H1 (cell line): ENCODE measurements at regions of chr2 and their contacts with region 1.

Region 1: DNA sequence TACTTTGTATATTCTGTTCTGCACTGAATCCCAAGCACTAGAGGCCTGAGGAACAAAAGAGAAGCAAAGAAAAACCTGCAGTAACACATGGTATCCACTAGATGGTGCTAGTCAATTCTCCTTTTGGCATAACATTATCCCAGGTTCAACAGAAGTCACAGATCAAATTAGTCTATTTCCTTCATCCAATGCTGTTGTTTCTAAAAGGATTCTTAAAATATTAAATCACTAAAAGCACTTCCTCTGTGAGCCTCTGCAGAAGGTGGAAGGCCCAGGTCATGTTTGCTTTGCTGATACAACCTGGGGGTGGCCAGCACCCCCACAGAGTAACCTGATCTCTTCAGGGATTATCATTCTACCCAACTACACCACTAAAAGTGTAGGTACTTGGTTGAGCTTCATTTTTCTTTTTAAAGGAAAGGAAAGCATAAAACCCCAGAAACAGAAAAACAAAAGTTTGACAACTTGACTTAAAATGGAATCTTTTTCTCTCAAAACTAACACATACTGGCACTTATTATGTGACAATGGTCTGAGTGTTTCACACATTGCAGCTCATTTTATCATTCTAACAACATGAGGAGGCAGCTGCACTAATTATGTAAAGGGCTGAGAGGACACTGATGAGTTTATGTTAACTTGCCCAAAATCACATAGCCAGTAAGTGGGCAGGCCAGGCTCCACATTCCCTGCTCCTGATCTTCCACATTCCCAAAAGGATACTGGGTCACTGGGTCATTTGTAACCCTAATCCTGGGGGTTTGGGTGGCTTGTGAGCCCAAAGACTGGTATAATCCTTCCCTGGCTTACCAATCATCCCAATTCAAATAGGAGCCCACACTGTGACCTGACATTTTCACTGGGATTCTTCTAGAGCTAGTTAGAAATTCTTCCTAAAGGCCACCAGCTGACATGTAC is 66.8 kb upstream of the DNER start:
- DNase-seq: peak in 1 of 2 experiments; percentile 50
- H3K4me3 ChIP-seq: no peak overlapping the region
- H3K27ac ChIP-seq: no peak overlapping the region
- H3K4me1 ChIP-seq: peaks cover 0 to 18% (median 9%) of the 10 kb centered on the region in 4 experiments; a peak in 6 of 7 replicates
- H3K27me3 ChIP-seq: no peaks in the 10 kb centered on the region
- CTCF ChIP-seq: peak in 2 of 3 experiments; percentile 39 to 85; a peak in 2 of 4 replicates
- EP300 ChIP-seq: no peak
- POLR2A ChIP-seq: no peak
- RAD21 ChIP-seq: peak; percentile 50

Region 2: GRCh38 chr2:229553091-229553490 is 228.0 kb before region 1 on chr2:
- CTCF ChIA-PET with region 1: no interaction called
- POLR2A ChIA-PET with region 1: no interaction called
- DNase-seq: no peak
- H3K4me3 ChIP-seq: no peak overlapping the region
- H3K27ac ChIP-seq: no peak overlapping the region
- H3K4me1 ChIP-seq: no peaks in the 10 kb centered on the region
- H3K27me3 ChIP-seq: no peaks in the 10 kb centered on the region
- CTCF ChIP-seq: no peak
- EP300 ChIP-seq: no peak
- POLR2A ChIP-seq: no peak
- RAD21 ChIP-seq: no peak

Region 3: DNA sequence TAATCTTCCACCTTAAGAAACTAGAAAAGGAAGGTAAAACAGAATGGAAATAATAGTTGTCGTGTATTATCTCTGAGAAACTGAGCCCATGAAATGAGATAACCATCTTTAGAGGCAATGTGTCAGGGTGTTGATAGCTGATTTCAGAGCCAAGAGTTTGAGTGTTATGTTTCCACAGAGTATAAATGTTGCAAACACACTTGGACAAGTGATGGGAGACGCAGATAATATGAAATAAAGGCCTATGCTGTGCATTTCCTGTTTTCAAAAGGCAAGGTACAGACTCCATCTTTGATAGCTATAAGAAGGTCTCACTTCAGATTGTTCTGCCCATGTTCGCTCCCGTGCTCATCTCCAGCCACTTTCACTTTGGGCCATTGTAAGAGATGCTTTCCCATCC is 40.8 kb before region 1 on chr2:
- CTCF ChIA-PET with region 1: no interaction called
- POLR2A ChIA-PET with region 1: no interaction called
- DNase-seq: no peak
- H3K4me3 ChIP-seq: no peak overlapping the region
- H3K27ac ChIP-seq: no peak overlapping the region
- H3K4me1 ChIP-seq: 0 out of 7 replicates have a peak, but pooled peaks cover 0 to 2% (median 0%) of the 10 kb centered on the region in 4 experiments
- H3K27me3 ChIP-seq: no peaks in the 10 kb centered on the region
- CTCF ChIP-seq: no peak
- EP300 ChIP-seq: no peak
- POLR2A ChIP-seq: no peak
- RAD21 ChIP-seq: no peak

Region 4: DNA sequence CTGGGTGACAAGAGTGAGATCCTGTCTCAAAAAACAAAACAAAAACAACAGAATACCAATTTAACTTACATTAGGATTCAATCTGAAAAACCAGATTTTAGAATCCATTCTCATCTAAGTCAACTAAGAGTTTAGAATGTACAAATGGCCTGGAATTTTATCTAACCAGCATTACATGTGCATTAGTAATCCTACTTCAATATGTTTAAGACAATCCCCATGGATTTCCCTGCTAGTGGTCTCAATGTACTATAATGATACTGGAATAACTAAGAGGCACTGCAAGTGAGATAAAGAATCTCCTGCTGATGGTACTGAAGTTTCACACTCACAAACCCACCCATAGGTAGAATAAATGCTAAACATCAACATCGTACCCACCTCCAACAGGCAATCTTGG is 12.9 kb before region 1 on chr2:
- CTCF ChIA-PET with region 1: interaction called, 24 read pairs
- POLR2A ChIA-PET with region 1: interaction called, 5 read pairs
- DNase-seq: no peak
- H3K4me3 ChIP-seq: no peak overlapping the region
- H3K27ac ChIP-seq: no peak overlapping the region
- H3K4me1 ChIP-seq: no peaks in the 10 kb centered on the region
- H3K27me3 ChIP-seq: no peaks in the 10 kb centered on the region
- CTCF ChIP-seq: no peak
- EP300 ChIP-seq: no peak
- POLR2A ChIP-seq: no peak
- RAD21 ChIP-seq: no peak

Region 5: DNA sequence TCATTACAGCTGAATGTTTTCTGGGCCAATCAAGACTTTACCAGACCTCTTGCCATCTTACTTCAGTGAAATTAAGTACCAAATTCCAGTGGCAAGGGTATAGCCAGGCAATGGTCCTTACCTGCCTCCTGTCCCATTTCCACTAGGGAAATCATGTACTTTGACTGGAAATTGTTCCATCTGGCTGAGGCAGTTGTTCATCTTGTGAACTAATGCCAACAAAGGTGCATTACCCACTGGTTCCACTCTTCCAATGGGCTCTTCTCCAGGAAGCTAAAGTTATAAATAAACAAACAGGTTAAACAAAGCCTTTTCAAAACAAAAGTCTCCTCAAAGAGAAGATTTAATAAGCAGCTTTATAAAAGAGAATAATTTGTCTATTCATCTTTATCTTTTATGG is 13.9 kb after region 1 on chr2:
- CTCF ChIA-PET with region 1: interaction called, 12 read pairs
- POLR2A ChIA-PET with region 1: no interaction called
- DNase-seq: no peak
- H3K4me3 ChIP-seq: no peak overlapping the region
- H3K27ac ChIP-seq: no peak overlapping the region
- H3K4me1 ChIP-seq: no peaks in the 10 kb centered on the region
- H3K27me3 ChIP-seq: no peaks in the 10 kb centered on the region
- CTCF ChIP-seq: no peak
- EP300 ChIP-seq: no peak
- POLR2A ChIP-seq: no peak
- RAD21 ChIP-seq: no peak

Region 6: GRCh38 chr2:229943770-229944449 is 162.8 kb after region 1 on chr2:
- CTCF ChIA-PET with region 1: no interaction called
- POLR2A ChIA-PET with region 1: no interaction called
- DNase-seq: no peak
- H3K4me3 ChIP-seq: no peak overlapping the region
- H3K27ac ChIP-seq: no peak overlapping the region
- H3K4me1 ChIP-seq: no peaks in the 10 kb centered on the region
- H3K27me3 ChIP-seq: no peaks in the 10 kb centered on the region; a peak in 1 of 7 replicates
- CTCF ChIP-seq: no peak
- EP300 ChIP-seq: no peak
- POLR2A ChIP-seq: no peak
- RAD21 ChIP-seq: no peak